CD4-positive, alpha-beta memory T cell (primary cell): ENCODE measurements at regions of chr5 and their contacts with region 1.

Region 1: DNA sequence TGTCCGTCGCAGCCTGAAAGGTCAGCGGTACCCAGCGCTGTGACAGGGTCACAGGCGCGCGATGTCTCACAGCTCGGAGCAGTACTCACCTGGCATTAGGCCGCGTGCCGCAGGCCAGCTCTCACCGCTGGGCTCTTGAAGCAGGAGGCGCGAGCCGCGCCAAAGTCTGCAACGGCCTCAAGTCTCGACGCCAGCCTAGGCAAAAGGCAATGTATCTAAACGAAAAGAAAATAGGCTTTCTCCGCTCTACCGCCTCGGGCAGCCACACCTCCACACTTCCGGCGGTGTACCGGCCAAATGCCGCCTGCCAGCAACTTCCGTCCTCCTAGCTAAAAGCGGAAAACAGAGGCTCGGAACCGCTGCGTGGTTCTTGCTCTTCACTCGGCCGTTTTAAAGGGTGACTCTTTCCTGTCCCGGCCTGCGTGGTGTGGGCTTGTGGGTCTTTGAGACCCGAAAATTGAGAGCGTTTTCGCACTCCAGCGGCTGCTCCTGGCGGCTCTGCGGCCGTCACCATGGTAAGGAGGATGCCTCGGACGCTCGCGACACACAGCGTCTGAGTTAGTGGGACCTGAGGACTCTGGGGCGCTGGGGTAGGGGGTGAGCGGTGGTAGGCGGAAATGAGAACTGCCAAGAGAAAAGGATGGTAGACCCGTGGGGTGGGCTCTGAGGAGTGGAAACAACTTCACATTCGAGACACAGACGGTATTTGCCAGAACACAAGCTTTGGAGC is at the starts of genes GFM2 and NSA2:
- DNase-seq: peak; percentile 92 to 94 (median 92)
- H3K4me3 ChIP-seq: peak within 1 kb of the TSS; percentile 93 to 100
- H3K4me3 Mint-ChIP-seq: peak within 1 kb of the TSS; percentile 95 to 100 (median 100)
- H3K27ac ChIP-seq: peak within 1 kb of the TSS; percentile 86
- H3K27ac Mint-ChIP-seq: peak within 1 kb of the TSS; percentile 91 to 99 (median 99)
- H3K4me1 ChIP-seq: peaks cover 35% of the 10 kb centered on the region
- H3K4me1 Mint-ChIP-seq: peaks cover 22 to 51% (median 35%) of the 10 kb centered on the region in 4 donors
- H3K27me3 ChIP-seq: no peaks in the 10 kb centered on the region
- H3K27me3 Mint-ChIP-seq: no peaks in the 10 kb centered on the region
- total RNA-seq, gene GFM2: 21.3 to 21.6 TPM
- total RNA-seq, gene NSA2: 103 to 120 TPM

Region 2: GRCh38 chr5:74798977-74799911 is 32.2 kb after region 1 on chr5:
- CTCF ChIA-PET with region 1: no interaction called
- POLR2A ChIA-PET with region 1: no interaction called
- intact Hi-C with region 1: no loop called
- DNase-seq: no peak
- H3K4me3 ChIP-seq: no peak overlapping the region
- H3K4me3 Mint-ChIP-seq: no peak overlapping the region
- H3K27ac ChIP-seq: no peak overlapping the region
- H3K27ac Mint-ChIP-seq: peak overlapping the region in 1 of 7 donors; percentile 36
- H3K4me1 ChIP-seq: no peaks in the 10 kb centered on the region
- H3K4me1 Mint-ChIP-seq: no peaks in the 10 kb centered on the region
- H3K27me3 ChIP-seq: no peaks in the 10 kb centered on the region
- H3K27me3 Mint-ChIP-seq: no peaks in the 10 kb centered on the region

Region 3: GRCh38 chr5:74864823-74865222 is 97.8 kb after region 1 on chr5:
- CTCF ChIA-PET with region 1: interaction called, 3 read pairs
- POLR2A ChIA-PET with region 1: interaction called, 4 read pairs
- intact Hi-C with region 1: loop called (anchors 5 kb)
- DNase-seq: no peak
- H3K4me3 ChIP-seq: no peak overlapping the region
- H3K4me3 Mint-ChIP-seq: peak overlapping the region; percentile 89 to 97 (median 94)
- H3K27ac ChIP-seq: no peak overlapping the region
- H3K27ac Mint-ChIP-seq: peak overlapping the region in 6 of 7 donors; percentile 4 to 96 (median 72)
- H3K4me1 ChIP-seq: peaks cover 14% of the 10 kb centered on the region
- H3K4me1 Mint-ChIP-seq: peaks cover 18 to 45% (median 36%) of the 10 kb centered on the region in 4 donors
- H3K27me3 ChIP-seq: no peaks in the 10 kb centered on the region
- H3K27me3 Mint-ChIP-seq: peaks cover 3 to 4% of the 10 kb centered on the region in 2 donors

Region 4: DNA sequence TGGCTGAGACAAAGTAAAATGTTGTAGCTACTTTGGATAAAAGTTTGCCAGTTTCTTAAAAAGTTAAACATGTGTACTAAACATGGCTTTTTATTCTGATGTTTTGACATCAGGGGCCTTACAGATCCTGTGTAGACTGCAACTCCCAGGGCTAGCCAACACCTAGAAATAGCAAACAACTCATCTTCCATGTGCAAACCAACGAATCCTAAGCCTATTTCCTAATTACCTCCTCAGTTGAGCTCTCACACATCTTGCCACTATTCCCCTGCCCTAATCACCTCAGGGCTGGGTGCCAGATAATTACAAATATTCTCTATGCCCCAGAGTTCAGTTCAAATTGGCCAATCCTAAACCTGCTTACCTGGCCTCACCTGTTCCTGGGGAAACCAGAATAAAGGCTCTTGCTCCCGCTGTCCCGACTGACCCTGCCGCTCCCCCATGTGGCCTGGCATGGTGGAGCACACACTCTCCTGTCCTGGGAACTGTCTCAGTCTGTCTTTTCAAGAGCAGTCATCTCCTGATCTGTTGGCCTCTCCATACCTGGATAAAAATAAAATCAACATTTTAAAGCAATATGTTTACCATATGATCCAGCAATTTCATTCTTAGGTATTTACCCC is 136.3 kb after region 1 on chr5:
- CTCF ChIA-PET with region 1: no interaction called
- POLR2A ChIA-PET with region 1: no interaction called
- intact Hi-C with region 1: loop called (anchors 2 kb)
- DNase-seq: peak in 2 of 5 donors; percentile 13 to 27
- H3K4me3 ChIP-seq: no peak overlapping the region
- H3K4me3 Mint-ChIP-seq: no peak overlapping the region
- H3K27ac ChIP-seq: no peak overlapping the region
- H3K27ac Mint-ChIP-seq: no peak overlapping the region
- H3K4me1 ChIP-seq: no peaks in the 10 kb centered on the region
- H3K4me1 Mint-ChIP-seq: peaks cover 0 to 3% (median 0%) of the 10 kb centered on the region in 4 donors
- H3K27me3 ChIP-seq: no peaks in the 10 kb centered on the region
- H3K27me3 Mint-ChIP-seq: no peaks in the 10 kb centered on the region

Region 5: DNA sequence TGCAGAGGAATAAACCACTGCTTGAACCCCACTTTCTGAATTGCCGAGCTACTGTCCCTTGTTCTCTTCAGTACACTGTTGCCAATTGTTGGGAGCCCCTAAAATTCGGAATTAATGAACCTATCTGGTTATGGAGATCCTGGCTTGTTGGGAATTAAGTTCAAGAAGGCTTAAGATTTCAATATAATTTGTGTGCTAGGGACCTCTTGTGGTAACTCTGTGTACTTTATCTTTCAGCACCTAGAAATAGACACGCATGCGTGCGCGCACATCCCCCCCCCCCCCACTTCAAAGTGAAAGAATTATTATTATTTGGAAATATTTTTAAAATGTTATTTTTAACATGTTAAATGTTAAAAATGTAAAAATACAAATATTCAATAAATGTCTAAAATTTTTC is 152.5 kb after region 1 on chr5:
- CTCF ChIA-PET with region 1: interaction called, 4 read pairs
- POLR2A ChIA-PET with region 1: no interaction called
- intact Hi-C with region 1: loop called (anchors 1 kb)
- DNase-seq: peak in 4 of 5 donors; percentile 19 to 48 (median 23)
- H3K4me3 ChIP-seq: no peak overlapping the region
- H3K4me3 Mint-ChIP-seq: peak overlapping the region in 1 of 8 donors; percentile 15
- H3K27ac ChIP-seq: no peak overlapping the region
- H3K27ac Mint-ChIP-seq: no peak overlapping the region
- H3K4me1 ChIP-seq: no peaks in the 10 kb centered on the region
- H3K4me1 Mint-ChIP-seq: no peaks in the 10 kb centered on the region
- H3K27me3 ChIP-seq: no peaks in the 10 kb centered on the region
- H3K27me3 Mint-ChIP-seq: peaks cover 0 to 5% of the 10 kb centered on the region in 2 donors

Region 6: GRCh38 chr5:75040991-75041390 is 274.0 kb after region 1 on chr5:
- CTCF ChIA-PET with region 1: no interaction called
- POLR2A ChIA-PET with region 1: no interaction called
- intact Hi-C with region 1: no loop called
- DNase-seq: no peak
- H3K4me3 ChIP-seq: no peak overlapping the region
- H3K4me3 Mint-ChIP-seq: no peak overlapping the region
- H3K27ac ChIP-seq: no peak overlapping the region
- H3K27ac Mint-ChIP-seq: peak overlapping the region in 1 of 7 donors; percentile 34
- H3K4me1 ChIP-seq: peaks cover 14% of the 10 kb centered on the region
- H3K4me1 Mint-ChIP-seq: peaks cover 14 to 55% (median 45%) of the 10 kb centered on the region in 4 donors
- H3K27me3 ChIP-seq: no peaks in the 10 kb centered on the region
- H3K27me3 Mint-ChIP-seq: no peaks in the 10 kb centered on the region

Region 7: GRCh38 chr5:75336625-75337339 is 569.8 kb after region 1 on chr5 and contains the start of gene HMGCR:
- CTCF ChIA-PET with region 1: interaction called, 4 read pairs
- POLR2A ChIA-PET with region 1: interaction called, 3 read pairs
- intact Hi-C with region 1: loop called (anchors 1 kb)
- DNase-seq: peak; percentile 95 to 98 (median 97)
- H3K4me3 ChIP-seq: peak within 1 kb of the TSS; percentile 90
- H3K4me3 Mint-ChIP-seq: no peak within 1 kb of the TSS
- H3K27ac ChIP-seq: peak within 1 kb of the TSS; percentile 72
- H3K27ac Mint-ChIP-seq: peak within 1 kb of the TSS in 1 of 7 donors; percentile 96
- H3K4me1 ChIP-seq: peaks cover 26% of the 10 kb centered on the region
- H3K4me1 Mint-ChIP-seq: peaks cover 27 to 39% (median 29%) of the 10 kb centered on the region in 4 donors
- H3K27me3 ChIP-seq: no peaks in the 10 kb centered on the region
- H3K27me3 Mint-ChIP-seq: no peaks in the 10 kb centered on the region
- total RNA-seq, gene HMGCR: 39.6 to 43.0 TPM

Region 8: GRCh38 chr5:75717082-75717922 is 950.3 kb after region 1 on chr5 and contains the start of gene POC5:
- CTCF ChIA-PET with region 1: no interaction called
- POLR2A ChIA-PET with region 1: no interaction called
- intact Hi-C with region 1: loop called (anchors 10 kb)
- DNase-seq: peak; percentile 98 to 99 (median 98)
- H3K4me3 ChIP-seq: peak within 1 kb of the TSS; percentile 74 to 95
- H3K4me3 Mint-ChIP-seq: peak within 1 kb of the TSS; percentile 99 to 100 (median 100)
- H3K27ac ChIP-seq: peak within 1 kb of the TSS; percentile 74
- H3K27ac Mint-ChIP-seq: peak within 1 kb of the TSS; percentile 98 to 100 (median 99)
- H3K4me1 ChIP-seq: peaks cover 18% of the 10 kb centered on the region
- H3K4me1 Mint-ChIP-seq: peaks cover 29 to 43% (median 36%) of the 10 kb centered on the region in 4 donors
- H3K27me3 ChIP-seq: no peaks in the 10 kb centered on the region
- H3K27me3 Mint-ChIP-seq: no peaks in the 10 kb centered on the region
- total RNA-seq, gene POC5: 15.1 to 20.0 TPM

Region 9: DNA sequence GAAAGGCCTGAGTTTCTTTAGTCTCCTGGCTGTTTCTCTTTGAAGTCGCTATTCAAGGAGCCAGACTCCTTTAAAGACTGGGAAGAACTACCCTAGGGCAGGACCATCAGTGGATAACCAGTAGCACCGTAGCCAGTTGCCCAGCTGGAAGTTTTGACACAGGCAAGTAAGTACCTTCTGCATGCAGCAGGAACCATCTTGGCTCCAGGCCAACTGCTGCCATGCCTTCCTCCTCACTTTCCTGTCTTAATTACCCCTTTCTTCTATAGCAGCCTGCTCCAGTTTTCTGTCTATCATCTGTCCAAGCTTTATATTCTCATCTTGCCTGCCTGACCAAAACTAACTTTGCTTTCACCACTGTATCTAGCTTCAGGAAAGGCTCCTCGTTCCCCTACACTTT is 1166.5 kb after region 1 on chr5:
- CTCF ChIA-PET with region 1: no interaction called
- POLR2A ChIA-PET with region 1: no interaction called
- intact Hi-C with region 1: no loop called
- DNase-seq: no peak
- H3K4me3 ChIP-seq: no peak overlapping the region
- H3K4me3 Mint-ChIP-seq: no peak overlapping the region
- H3K27ac ChIP-seq: no peak overlapping the region
- H3K27ac Mint-ChIP-seq: peak overlapping the region in 1 of 7 donors; percentile 26
- H3K4me1 ChIP-seq: no peaks in the 10 kb centered on the region
- H3K4me1 Mint-ChIP-seq: no peaks in the 10 kb centered on the region
- H3K27me3 ChIP-seq: no peaks in the 10 kb centered on the region
- H3K27me3 Mint-ChIP-seq: peaks cover 8 to 10% of the 10 kb centered on the region in 2 donors

Region 10: DNA sequence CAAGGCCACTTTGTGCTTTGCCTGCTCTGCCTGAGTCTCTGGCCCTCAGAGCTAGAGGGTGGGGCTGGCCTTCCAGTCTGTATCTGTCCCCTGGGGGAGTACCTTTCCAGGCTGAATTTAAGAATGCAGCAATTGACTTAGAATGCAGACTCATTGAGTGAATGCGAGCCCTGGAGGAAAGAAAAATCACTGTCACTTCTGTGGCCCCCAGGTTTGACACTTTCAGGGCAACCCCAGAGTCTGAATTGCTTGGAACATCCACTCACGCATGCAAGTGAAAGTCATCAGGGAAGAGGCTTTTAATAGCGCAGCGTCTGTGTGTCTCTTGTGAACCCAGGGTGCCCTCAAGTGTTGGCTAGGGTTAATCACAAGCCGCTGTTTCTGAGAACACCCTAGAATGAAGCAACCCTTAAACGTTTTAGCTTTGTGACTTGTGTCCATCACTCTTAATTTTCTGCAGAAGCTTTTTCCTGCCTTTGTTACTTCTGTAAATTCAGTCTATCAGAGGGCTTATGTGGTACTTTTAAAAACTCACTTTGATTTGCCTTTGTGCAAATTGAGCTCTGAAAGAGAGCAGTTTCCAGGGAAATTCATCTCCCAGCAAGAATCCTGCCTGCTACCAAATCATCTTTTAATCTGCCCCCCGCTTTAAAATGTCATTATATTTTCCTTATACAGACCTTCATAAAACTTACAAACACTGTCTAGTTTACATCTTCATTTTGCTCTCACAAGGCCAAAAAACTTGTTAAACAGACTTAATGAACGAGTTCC is 1489.3 kb after region 1 on chr5:
- CTCF ChIA-PET with region 1: no interaction called
- POLR2A ChIA-PET with region 1: no interaction called
- intact Hi-C with region 1: loop called (anchors 5 kb)
- DNase-seq: peak; percentile 55 to 70 (median 64)
- H3K4me3 ChIP-seq: no peak overlapping the region
- H3K4me3 Mint-ChIP-seq: peak overlapping the region in 4 of 8 donors; percentile 17 to 70 (median 36)
- H3K27ac ChIP-seq: no peak overlapping the region
- H3K27ac Mint-ChIP-seq: peak overlapping the region in 1 of 7 donors; percentile 14
- H3K4me1 ChIP-seq: peaks cover 4% of the 10 kb centered on the region
- H3K4me1 Mint-ChIP-seq: peaks cover 6 to 9% (median 7%) of the 10 kb centered on the region in 4 donors
- H3K27me3 ChIP-seq: no peaks in the 10 kb centered on the region
- H3K27me3 Mint-ChIP-seq: peaks cover 0 to 6% of the 10 kb centered on the region in 2 donors